Activated T-helper 1 cell treated with anti-CD3 and anti-CD28 coated beads, Interleukin-12 subunit alpha, Interleukin-12 subunit beta, Interleukin-2, Interleukin-4 antibody, amounts not matched to agents 30 ng/mL and 10 ng/mL and 1 ng/mL, durations not matched to agents 14 hours and 24 hours and 36 hours (primary cell): ENCODE measurements at regions of chr5 and their contacts with region 1.

Region 1: DNA sequence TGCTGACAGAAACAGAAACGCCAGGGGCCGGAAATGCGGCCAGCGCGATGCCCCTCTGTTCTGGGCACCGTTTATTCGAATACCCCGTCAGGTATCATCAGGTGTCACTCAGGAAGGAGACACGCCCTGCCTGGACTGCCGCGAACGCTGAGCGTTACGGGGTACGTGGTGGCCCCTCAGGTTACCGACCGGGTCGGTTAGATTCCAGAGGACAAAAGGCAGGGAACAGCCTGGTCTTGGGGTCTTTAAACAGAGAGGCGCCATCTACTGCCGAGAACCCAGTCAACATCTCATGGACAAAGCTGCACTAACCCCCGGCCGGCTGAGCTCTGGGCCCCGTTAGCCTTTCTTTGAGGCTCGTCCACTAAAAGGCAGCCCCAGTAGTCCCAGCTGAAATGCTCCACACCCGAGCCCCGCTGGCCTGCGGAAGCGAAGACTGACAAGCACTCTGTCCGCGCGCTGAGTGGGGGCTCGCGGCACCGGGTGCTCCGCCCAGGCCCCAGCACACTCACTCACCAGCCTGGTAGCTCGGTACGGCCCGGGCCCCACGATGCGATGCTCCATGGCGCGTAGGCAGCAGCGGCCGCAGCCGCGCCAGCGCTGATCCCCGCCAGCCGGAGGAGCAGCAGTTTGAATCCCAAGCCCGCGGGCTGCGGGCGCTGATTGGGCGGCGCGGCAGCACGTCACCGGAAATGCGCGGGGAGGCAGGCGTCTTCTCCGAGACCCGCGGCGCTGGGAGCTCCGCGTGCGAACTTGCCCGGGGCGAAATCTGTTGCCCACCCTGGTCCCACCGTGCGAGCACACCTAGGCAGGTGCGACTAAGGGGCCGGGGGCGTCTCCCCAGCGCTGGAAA is at the start of gene DEPDC1B:
- DNase-seq: peak; percentile 87
- H3K4me3 Mint-ChIP-seq: peak within 1 kb of the TSS; percentile 96
- H3K27ac Mint-ChIP-seq: peak within 1 kb of the TSS; percentile 93
- H3K4me1 Mint-ChIP-seq: peaks cover 37% of the 10 kb centered on the region
- H3K27me3 Mint-ChIP-seq: peaks cover 18% of the 10 kb centered on the region
- total RNA-seq, gene DEPDC1B: 19.6 and 21.2 TPM in 2 replicates

Region 2: DNA sequence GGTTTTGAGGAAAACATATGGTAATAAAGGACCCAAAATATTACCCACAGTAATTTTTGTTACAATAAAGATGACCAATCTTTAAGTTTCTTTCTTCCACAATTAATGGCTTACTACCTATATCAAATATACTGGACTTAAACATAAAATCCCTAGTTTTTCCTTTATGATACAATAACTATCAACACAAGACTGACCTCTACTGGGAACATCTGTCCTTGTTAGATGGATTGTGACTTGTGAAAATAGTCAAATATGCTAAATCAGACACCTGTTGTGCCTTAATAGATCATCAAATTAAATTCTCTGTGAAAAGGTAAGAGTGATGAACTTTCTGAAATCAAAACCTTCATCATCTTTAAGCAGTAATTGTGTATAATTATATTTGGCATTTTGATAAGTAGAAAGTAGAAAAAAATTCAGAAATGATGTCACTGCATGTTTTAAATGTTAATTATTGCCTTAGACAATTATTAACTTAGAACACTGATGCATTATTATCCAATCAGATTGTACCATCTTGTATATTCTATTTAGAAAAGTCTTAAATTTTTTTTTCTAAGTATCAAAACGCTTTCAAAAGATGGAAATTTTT is 113.4 kb before region 1 on chr5:
- intact Hi-C with region 1: no loop called
- DNase-seq: no peak
- H3K4me3 Mint-ChIP-seq: no peak overlapping the region
- H3K27ac Mint-ChIP-seq: no peak overlapping the region
- H3K4me1 Mint-ChIP-seq: no peaks in the 10 kb centered on the region
- H3K27me3 Mint-ChIP-seq: peaks cover 1% of the 10 kb centered on the region

Region 3: GRCh38 chr5:60826653-60827052 is 126.9 kb after region 1 on chr5:
- intact Hi-C with region 1: loop called (anchors 5 kb)
- DNase-seq: no peak
- H3K4me3 Mint-ChIP-seq: no peak overlapping the region
- H3K27ac Mint-ChIP-seq: no peak overlapping the region
- H3K4me1 Mint-ChIP-seq: peaks cover 31% of the 10 kb centered on the region
- H3K27me3 Mint-ChIP-seq: no peaks in the 10 kb centered on the region

Region 4: DNA sequence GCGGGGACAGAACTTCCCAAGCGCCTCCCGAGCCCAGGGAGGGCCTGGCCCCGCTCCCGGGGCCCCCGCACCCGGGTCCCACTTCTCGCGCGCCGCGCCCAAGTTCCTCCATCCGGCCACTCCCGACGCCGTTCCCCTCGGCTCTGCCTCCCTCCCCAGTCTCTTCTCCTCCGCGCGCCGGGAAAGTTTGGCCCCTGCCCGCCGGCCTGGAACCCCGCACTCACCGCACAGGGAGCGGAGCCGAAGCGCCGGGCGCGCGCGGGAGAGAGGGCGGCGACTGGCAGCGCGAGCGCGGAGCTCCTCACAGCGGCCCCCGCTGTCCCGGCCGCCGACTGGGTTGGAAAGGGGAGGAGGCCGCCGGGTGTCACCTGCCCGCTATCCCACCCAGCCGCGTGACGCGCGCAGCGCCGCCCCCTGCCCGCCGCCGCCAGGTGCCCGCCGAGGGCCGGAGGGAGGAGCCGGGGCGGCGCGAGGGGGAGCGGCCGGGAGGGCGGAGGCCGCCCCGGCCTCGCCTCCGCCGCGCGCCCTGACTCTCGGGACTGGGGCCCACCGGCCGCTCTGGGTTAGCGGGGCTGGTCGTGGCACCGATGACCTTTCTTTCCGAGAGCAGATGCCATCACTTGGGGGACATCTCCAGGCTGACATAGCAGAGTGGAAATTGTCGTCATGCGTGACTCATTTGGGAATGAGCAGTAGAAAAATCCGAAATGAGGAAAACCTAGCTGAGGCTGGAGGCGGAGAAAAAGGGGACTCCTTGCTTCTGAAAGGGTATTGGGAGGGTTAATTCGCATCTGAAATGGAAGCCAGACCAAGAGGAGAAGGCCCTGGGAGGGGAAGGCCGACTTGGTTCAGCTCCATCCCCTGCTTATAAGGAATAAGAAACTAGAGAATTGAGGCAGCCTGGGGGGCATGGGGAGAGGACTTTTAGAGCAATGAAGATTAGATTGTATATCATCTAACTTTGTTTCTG is 144.5 kb after region 1 on chr5 and contains the start of gene ELOVL7:
- intact Hi-C with region 1: loop called (anchors 1 kb)
- DNase-seq: peak; percentile 37
- H3K4me3 Mint-ChIP-seq: peak within 1 kb of the TSS; percentile 84
- H3K27ac Mint-ChIP-seq: no peak within 1 kb of the TSS
- H3K4me1 Mint-ChIP-seq: peaks cover 12% of the 10 kb centered on the region
- H3K27me3 Mint-ChIP-seq: peaks cover 63% of the 10 kb centered on the region
- total RNA-seq, gene ELOVL7: 0.34 and 0.49 TPM in 2 replicates

Region 5: DNA sequence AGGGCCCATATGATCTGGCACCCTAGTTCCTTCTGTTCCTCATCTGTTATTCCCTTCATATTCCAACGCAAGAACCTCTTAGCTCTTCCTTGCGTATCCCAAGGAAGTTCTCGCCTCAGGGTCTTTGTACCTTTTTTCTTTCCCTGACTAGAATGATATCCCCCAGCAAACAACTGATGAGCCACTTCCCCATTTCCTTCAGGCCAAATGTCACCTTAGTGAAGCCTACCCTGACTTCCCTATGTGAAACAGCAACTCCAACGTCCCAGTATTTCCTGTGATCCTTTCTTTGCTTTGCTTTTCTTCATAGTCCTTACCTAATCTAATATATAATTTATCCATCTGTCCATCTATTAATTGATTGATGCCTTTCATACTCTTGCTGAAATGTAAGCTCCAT is 197.2 kb after region 1 on chr5:
- intact Hi-C with region 1: no loop called
- DNase-seq: no peak
- H3K4me3 Mint-ChIP-seq: no peak overlapping the region
- H3K27ac Mint-ChIP-seq: no peak overlapping the region
- H3K4me1 Mint-ChIP-seq: no peaks in the 10 kb centered on the region
- H3K27me3 Mint-ChIP-seq: no peaks in the 10 kb centered on the region

Region 6: DNA sequence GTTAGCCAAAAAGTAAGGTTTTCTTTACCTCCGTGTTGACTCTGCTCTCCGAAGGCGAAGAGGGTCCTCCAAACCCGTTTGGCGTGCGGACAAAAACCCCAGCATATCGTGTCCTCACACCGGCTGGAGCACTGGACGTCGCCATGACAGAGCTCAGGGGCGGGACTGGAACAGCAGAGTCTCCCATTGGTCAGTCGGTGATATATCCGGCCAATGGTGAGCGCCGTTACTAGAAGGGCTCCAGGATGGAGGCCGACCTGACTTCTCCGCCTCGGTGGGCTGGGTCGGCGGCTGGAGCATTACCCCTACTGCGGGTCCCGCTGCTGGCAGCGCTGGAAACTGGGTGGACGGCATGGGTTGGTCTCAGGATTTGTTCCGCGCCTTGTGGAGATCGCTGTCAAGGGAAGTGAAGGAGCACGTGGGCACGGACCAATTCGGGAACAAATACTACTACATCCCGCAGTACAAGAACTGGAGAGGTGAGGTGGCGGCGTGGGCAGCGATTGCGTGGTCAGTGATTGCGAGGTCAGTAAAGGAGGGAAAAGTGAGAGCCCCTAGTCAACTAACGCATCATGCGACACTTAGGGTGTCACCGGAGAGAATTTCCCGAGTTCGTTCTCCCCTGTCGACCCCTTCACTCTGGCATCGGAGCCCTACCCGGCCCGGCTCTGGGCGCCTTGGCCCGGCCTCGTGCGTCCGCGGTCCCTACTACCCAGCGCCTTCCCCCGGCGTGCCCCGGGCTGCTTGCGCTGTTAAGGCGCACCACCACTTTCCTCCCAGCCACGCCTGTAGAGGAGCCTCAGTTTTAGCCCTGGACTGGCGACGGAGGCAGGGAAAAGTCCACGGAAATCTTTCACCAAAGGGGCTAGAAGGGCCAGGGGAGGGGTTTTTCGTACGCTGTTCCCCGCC is 245.4 kb after region 1 on chr5 and contains the starts of genes ERCC8 and NDUFAF2:
- intact Hi-C with region 1: loop called (anchors 1 kb)
- DNase-seq: peak; percentile 85
- H3K4me3 Mint-ChIP-seq: no peak within 1 kb of the TSS
- H3K27ac Mint-ChIP-seq: no peak within 1 kb of the TSS
- H3K4me1 Mint-ChIP-seq: peaks cover 22% of the 10 kb centered on the region
- H3K27me3 Mint-ChIP-seq: no peaks in the 10 kb centered on the region
- total RNA-seq, gene ERCC8: 9.8 and 10.7 TPM in 2 replicates
- total RNA-seq, gene NDUFAF2: 32.9 and 33.8 TPM in 2 replicates

Region 7: DNA sequence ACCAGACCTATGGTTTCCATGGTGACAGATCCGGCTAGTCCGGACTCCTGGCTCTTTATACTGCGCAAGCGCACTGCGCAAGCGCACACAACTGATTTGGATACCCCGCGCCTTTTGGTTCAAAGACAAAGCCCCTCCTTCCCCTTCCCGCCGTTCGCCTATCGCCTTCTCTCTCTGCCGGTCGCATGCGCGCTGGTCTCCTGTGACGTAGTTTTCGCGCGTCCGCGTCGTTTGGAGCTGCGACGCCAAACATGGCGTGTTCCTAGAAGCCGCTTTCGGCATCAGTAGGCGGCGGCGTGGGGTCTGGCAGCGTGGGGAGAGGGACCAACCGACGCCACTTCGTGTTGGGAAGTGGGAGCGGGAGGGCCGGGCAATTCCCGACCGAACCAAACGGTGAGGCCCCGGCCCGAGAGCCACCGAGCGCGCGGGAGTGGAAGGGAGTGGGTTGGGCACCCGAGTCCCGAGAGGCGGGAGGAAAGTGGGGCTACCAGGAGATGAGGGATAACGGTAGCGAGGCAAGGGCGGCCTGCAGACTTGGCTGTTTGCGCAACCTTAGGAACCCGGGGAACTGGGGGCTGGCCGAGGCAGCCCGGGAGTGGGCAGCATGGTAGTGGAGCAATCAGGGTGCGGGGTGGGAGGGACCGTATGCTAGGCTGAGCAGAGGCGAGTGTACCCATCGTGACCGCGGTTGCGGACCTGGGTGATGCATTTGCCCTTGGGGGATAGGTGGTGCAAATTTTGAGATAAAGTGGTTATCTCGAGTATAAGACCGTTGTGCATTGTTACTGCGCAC is 1713.0 kb after region 1 on chr5 and contains the start of gene IPO11:
- intact Hi-C with region 1: loop called (anchors 2 kb)
- DNase-seq: peak; percentile 99
- H3K4me3 Mint-ChIP-seq: peak within 1 kb of the TSS; percentile 94
- H3K27ac Mint-ChIP-seq: peak within 1 kb of the TSS; percentile 90
- H3K4me1 Mint-ChIP-seq: peaks cover 21% of the 10 kb centered on the region
- H3K27me3 Mint-ChIP-seq: peaks cover 7% of the 10 kb centered on the region
- total RNA-seq, gene IPO11: 52.5 and 54.2 TPM in 2 replicates